Activated CD4-positive, alpha-beta T cell treated with anti-CD3 and anti-CD28 coated beads, Interleukin-2, amount 10 ng/mL, durations not matched to agents 24 days and 14 days (primary cell): ENCODE measurements at regions of chr6 and their contacts with region 1.

Region 1: GRCh38 chr6:119313937-119314884 is 35.4 kb downstream of the MAN1A1 start:
- DNase-seq: peak; percentile 83
- H3K4me3 Mint-ChIP-seq: peak overlapping the region; percentile 81
- H3K27ac Mint-ChIP-seq: peak overlapping the region; percentile 98
- H3K4me1 Mint-ChIP-seq: peaks cover 71% of the 10 kb centered on the region
- H3K27me3 Mint-ChIP-seq: no peaks in the 10 kb centered on the region

Region 2: GRCh38 chr6:119261945-119262286 is 52.3 kb before region 1 on chr6:
- intact Hi-C with region 1: loop called (anchors 2 kb)
- DNase-seq: no peak
- H3K4me3 Mint-ChIP-seq: peak overlapping the region; percentile 36
- H3K27ac Mint-ChIP-seq: peak overlapping the region; percentile 91
- H3K4me1 Mint-ChIP-seq: peaks cover 27% of the 10 kb centered on the region
- H3K27me3 Mint-ChIP-seq: no peaks in the 10 kb centered on the region

Region 3: DNA sequence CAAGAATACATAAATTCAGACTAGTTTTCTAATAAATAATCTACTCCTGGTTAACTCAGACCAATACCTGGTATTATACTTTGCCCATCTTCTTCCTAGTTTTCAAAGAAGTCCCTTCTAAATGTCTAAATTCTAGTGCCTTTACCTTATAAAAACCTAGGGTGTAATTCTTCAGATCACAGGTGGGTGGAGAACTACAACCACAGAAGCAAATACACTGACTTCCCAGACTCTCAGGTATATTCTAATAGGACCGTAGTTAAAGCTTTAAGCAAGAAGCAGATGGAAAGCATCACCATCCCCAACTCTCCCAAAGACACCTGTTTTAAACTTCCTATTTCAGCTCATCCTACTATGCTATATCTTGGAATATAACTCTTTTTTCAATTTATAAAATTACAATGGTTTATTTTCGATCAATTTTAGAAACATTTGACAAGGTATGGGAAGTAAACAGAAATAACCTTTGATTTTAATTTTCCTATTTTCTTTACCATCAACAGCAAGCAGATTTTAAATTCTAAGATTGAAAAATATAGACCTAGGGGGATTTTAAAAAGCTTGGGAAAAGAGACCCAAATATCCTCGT is 19.6 kb after region 1 on chr6:
- intact Hi-C with region 1: loop called (anchors 2 kb)
- DNase-seq: peak; percentile 64
- H3K4me3 Mint-ChIP-seq: no peak overlapping the region
- H3K27ac Mint-ChIP-seq: no peak overlapping the region
- H3K4me1 Mint-ChIP-seq: peaks cover 48% of the 10 kb centered on the region
- H3K27me3 Mint-ChIP-seq: no peaks in the 10 kb centered on the region